ENCODE measurements at regions of chr13 and their contacts with region 1.

Region 1: DNA sequence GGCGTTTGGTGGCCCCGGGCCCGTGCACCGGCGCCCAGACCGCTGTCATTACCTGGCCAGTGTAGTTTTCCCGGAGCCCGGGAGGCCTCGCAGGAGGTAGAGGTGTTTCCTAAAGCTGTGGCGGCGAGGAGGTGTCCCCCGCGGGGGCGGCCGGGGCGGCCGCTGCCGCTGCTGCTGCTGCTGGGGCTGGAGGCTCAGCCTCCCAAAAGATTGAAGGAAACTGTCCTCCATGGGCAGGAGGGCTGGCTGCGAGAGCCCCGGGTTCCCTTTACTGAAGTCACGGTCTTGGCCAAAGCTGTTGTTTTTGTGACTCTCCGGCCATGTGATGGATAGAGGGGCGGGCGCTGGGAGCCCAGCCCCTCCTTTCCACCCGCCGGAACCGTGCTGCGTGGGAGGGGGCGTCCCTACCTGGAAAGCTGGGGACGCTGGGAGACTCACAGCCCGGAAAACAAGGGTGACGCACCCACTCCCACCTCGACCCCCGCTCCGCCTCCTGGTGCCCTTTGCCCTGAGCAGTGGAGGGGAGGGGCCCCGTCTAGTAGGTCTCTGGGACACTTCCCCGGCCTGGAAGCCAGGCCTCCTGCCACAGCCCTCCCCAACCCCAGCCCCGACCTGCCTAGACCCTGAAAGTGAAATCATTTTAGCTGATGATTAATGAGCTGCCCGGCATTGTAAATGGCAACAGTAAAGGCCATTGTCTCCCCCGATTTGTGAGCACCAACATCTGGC is at the start of gene N4BP2L1:
- DNase-seq: peak; percentile 77
- ATAC-seq: peak; percentile 78
- total RNA-seq, gene N4BP2L1: 3.9 TPM

Region 2: GRCh38 chr13:32538621-32539246 is 110.7 kb after region 1 on chr13 and contains the start of gene N4BP2L2:
- intact Hi-C with region 1: loop called (anchors 10 kb)
- DNase-seq: peak; percentile 92
- ATAC-seq: peak; percentile 98
- total RNA-seq, gene N4BP2L2: 123 TPM

Measured in left ventricle myocardium superior (tissue), 1 donor.